A549 (cell line): ENCODE measurements at regions of chr12 and their contacts with region 1.

Region 1: DNA sequence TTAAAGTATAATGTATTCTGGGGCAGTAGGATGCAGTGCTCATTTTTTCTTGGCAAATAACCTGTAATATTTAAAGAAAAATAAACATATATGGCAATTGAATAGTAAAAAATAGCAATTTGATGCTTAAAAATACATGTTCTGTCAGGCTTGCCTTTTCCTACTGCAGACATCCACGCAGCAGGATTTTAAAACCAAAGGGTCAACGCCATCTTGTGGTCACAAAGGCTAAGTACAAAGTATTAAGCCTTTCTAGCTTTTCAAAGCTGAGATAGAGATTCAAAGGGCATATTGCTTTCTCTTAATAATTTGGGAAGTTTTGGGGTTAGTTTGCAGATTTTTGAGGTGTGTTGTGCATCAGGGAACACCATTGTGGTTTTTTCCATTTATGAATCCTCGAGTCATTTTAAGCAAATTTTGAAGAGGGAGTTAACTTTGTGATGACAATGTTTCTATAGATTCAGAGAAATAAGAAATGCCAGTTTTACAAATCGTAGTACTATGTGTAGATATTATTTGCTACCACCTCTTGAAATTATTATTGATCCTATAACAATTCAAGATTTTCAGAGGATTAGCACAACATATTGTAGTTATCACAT is 4.7 kb upstream of the CCER1 start:
- DNase-seq: peak; percentile 29 to 65
- ATAC-seq: peak; percentile 79 to 91; a peak in 4 of 6 replicates
- H3K4me3 ChIP-seq: no peak overlapping the region
- H3K27ac ChIP-seq: no peak overlapping the region
- H3K4me1 ChIP-seq: peaks cover 3% of the 10 kb centered on the region; the same call in 1 of the 3 replicates
- CTCF ChIP-seq: peak; percentile 69
- EP300 ChIP-seq: no peak
- POLR2A ChIP-seq: no peak
- RAD21 ChIP-seq: peak; percentile 49 to 67

Region 2: DNA sequence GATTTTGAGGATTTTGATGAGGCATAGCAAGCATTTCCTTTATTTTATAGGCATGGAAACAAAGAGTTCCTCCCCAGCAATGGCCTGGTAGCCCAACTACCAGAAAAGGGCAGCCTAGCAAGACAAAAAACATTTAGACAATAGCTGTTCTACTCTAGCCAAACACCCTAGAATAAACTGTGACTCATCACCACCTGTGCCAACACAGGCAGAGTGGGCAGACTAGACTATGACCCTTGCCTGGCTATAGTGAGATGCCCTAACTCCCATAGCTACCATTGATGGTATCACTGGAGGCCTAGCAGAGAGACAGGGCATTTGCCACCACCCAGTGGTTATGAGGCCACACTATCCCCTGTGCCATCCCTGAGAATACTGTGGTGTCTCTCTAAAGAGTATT is 10.8 kb after region 1 on chr12:
- CTCF ChIA-PET with region 1: interaction called, 13 read pairs
- POLR2A ChIA-PET with region 1: no interaction called
- DNase-seq: peak in 1 of 2 experiments; percentile 36
- ATAC-seq: peak; percentile 47 to 71; a peak in 3 of 6 replicates
- H3K4me3 ChIP-seq: no peak overlapping the region
- H3K27ac ChIP-seq: no peak overlapping the region
- H3K4me1 ChIP-seq: peaks cover 17% of the 10 kb centered on the region
- CTCF ChIP-seq: no peak
- EP300 ChIP-seq: no peak
- POLR2A ChIP-seq: no peak
- RAD21 ChIP-seq: no peak